ENCODE measurements at regions of chr22 and their contacts with region 1.

Region 1: DNA sequence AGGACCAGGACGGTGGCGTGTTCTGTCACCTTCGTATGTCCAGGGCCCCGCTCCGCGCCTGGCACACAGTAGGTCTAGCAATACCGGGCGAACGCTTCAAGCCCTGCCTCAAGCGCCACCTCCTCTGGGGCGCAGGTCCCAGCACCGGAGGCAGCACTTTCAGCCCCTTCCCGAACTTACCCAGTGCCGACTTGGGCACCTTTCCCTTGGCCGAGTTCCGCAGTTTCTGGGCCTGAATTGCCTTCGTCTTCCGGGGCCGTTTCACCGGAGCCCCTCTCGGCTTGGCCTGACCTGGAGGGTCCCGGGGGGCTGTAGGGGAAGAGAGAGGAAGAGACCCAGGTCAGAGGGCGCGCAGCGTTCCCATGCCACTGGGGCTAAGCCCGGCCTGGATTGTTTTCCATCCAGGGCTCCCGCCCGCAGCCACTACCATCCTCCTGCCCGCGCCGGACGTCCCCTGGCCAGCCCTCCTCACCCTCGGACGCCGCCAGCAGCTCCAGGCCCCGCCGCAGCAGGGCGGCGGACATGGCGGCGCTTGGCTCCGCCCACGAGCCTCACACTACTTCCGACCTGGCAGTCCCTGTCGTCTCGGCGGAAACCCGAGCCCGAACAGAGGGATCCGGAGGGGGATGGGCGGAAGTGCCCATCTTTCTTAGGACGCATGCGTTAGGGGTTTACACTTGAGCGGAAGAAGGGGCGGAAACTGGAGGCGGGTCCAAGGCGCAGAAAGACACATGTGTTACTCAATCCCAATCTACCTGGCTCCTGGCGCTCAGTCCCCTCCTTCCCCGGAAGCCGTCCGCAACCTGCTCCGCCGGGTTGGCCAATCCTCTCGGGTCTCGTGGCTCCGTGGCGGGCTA is at the start of gene RPS19BP1:
- DNase-seq: peak; percentile 93 to 100 (median 99)
- ATAC-seq: peak; percentile 87 to 88
- H3K4me3 Mint-ChIP-seq: peak within 1 kb of the TSS; percentile 90 to 99 (median 97)
- H3K27ac Mint-ChIP-seq: peak within 1 kb of the TSS; percentile 89 to 98 (median 96)
- H3K4me1 Mint-ChIP-seq: peaks cover 27 to 63% (median 56%) of the 10 kb centered on the region in 4 donors
- H3K27me3 Mint-ChIP-seq: peaks cover 0 to 1% (median 0%) of the 10 kb centered on the region in 5 donors
- polyA plus RNA-seq, gene RPS19BP1: 122 to 129 (median 128) TPM

Region 2: DNA sequence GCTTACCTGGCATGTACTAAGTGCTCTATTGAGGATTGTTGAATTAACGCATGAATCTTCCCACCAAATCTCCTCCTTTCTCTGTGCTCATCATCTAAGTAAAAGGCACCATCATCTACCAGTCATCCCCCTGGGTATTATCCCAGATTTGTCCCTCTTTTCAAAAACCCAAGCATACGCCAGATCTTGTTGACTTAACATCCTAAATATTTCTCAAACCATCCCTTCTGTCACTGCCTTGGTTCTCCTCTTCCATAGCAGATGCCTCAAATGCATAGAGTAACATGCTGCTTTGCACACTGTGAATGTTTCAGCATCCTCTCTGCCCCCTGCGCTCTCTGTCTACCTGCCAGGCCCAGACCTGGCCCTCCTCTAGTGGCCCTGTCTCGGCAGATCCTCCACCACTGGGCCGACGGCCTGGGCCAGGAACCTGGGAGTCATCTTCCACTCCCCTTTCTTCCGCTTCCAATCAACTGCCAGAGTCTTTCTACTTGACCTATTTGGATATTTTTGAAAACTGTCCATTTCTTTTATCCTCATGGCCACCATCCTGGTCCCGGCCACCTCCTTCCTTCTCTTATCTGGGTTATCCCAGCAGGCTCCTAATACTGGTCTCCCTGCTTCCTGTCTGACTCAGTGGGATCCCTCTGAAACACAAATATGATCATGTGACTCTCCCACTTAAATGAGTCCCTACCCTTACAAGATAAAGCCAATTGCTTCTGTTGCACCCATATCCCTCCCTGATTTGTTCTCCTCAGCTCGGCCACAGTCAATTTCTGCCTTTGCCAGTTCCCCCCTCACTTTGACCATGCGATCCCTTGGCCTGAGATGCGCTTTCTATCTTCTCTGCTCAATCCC is 136.3 kb before region 1 on chr22:
- POLR2A ChIA-PET with region 1: interaction called, 15 read pairs
- DNase-seq: no peak
- ATAC-seq: no peak
- H3K4me3 Mint-ChIP-seq: peak overlapping the region in 2 of 10 donors; percentile 20 to 21
- H3K27ac Mint-ChIP-seq: peak overlapping the region in 3 of 10 donors; percentile 17 to 48 (median 35)
- H3K4me1 Mint-ChIP-seq: peaks cover under 1 to 11% (median 7%) of the 10 kb centered on the region in 4 donors
- H3K27me3 Mint-ChIP-seq: no peaks in the 10 kb centered on the region

Region 3: DNA sequence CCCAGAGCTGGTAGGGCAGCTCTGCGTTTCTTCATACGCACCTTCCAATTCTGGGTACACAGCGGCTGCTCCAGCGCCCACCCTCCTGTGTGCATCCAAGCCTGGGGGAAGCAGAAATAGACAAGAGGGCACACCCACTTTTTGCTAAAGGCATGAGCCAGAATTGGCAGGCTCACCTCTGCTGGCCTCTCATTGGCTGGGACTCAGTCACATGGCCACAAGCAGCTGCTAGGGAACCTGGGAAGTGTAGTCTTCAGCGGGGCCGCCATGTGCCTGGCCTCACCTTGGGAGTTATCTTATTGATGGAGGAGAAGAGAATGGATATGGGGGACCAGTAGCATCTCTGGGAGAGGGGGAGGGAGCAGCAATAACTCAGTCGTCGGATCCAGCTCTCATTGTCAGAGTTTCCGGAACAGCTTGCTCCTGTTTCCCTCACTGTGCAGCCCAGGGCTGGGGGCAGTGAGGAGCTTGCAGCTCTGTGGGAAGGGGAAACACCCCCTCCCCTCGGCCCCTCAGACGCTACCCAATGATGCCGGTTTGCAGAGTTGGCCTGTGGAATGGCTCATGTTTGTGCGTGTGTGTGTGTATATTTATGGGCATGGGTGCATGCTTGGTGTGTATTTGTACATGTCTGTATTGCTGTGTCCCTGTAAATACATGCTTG is 42.2 kb before region 1 on chr22:
- POLR2A ChIA-PET with region 1: interaction called, 19 read pairs
- DNase-seq: peak; percentile 52 to 88 (median 75)
- ATAC-seq: peak; percentile 100
- H3K4me3 Mint-ChIP-seq: peak overlapping the region in 4 of 10 donors; percentile 51 to 81 (median 71)
- H3K27ac Mint-ChIP-seq: peak overlapping the region in 5 of 10 donors; percentile 25 to 82 (median 59)
- H3K4me1 Mint-ChIP-seq: peaks cover 9 to 16% (median 14%) of the 10 kb centered on the region in 4 donors
- H3K27me3 Mint-ChIP-seq: no peaks in the 10 kb centered on the region

Region 4: GRCh38 chr22:39496131-39496838 is 36.2 kb before region 1 on chr22:
- POLR2A ChIA-PET with region 1: interaction called, 19 read pairs
- DNase-seq: peak in 9 of 10 donors; percentile 27 to 49 (median 41)
- ATAC-seq: peak; percentile 78 to 88
- H3K4me3 Mint-ChIP-seq: no peak overlapping the region
- H3K27ac Mint-ChIP-seq: peak overlapping the region in 2 of 10 donors; percentile 35 to 58
- H3K4me1 Mint-ChIP-seq: peaks cover 1 to 12% (median 7%) of the 10 kb centered on the region in 4 donors
- H3K27me3 Mint-ChIP-seq: no peaks in the 10 kb centered on the region

Region 5: GRCh38 chr22:39502109-39502788 is 30.2 kb before region 1 on chr22 and contains the start of gene MIEF1:
- POLR2A ChIA-PET with region 1: interaction called, 14 read pairs
- DNase-seq: peak; percentile 76 to 93 (median 80)
- ATAC-seq: peak; percentile 95 to 96
- H3K4me3 Mint-ChIP-seq: peak within 1 kb of the TSS; percentile 83 to 99 (median 97)
- H3K27ac Mint-ChIP-seq: peak within 1 kb of the TSS; percentile 87 to 98 (median 95)
- H3K4me1 Mint-ChIP-seq: peaks cover 24 to 50% (median 46%) of the 10 kb centered on the region in 4 donors
- H3K27me3 Mint-ChIP-seq: no peaks in the 10 kb centered on the region
- polyA plus RNA-seq, gene MIEF1: 22.2 to 35.8 (median 25.9) TPM

Region 6: GRCh38 chr22:39785232-39785631 is 252.8 kb after region 1 on chr22:
- POLR2A ChIA-PET with region 1: no interaction called
- DNase-seq: no peak
- ATAC-seq: no peak
- H3K4me3 Mint-ChIP-seq: no peak overlapping the region
- H3K27ac Mint-ChIP-seq: no peak overlapping the region
- H3K4me1 Mint-ChIP-seq: peaks cover 5 to 9% (median 7%) of the 10 kb centered on the region in 4 donors
- H3K27me3 Mint-ChIP-seq: no peaks in the 10 kb centered on the region